PC-9 (cell line): ENCODE measurements at regions of chr2 and their contacts with region 1.

Region 1: GRCh38 chr2:45554073-45554741 is 56.9 kb downstream of the SRBD1 start:
- DNase-seq: no peak
- H3K4me3 ChIP-seq: no peak overlapping the region
- H3K27ac ChIP-seq: no peak overlapping the region
- H3K4me1 ChIP-seq: 0 out of 2 replicates have a peak, but pooled peaks cover 7% of the 10 kb centered on the region
- H3K27me3 ChIP-seq: no peaks in the 10 kb centered on the region
- CTCF ChIP-seq: no peak

Region 2: GRCh38 chr2:44397447-44398175 is 1156.6 kb before region 1 on chr2:
- CTCF ChIA-PET with region 1: no interaction called
- POLR2A ChIA-PET with region 1: interaction called, 15 read pairs
- intact Hi-C with region 1: no loop called
- DNase-seq: no peak
- H3K4me3 ChIP-seq: no peak overlapping the region
- H3K27ac ChIP-seq: no peak overlapping the region
- H3K4me1 ChIP-seq: no peaks in the 10 kb centered on the region
- H3K27me3 ChIP-seq: no peaks in the 10 kb centered on the region
- CTCF ChIP-seq: no peak

Region 3: DNA sequence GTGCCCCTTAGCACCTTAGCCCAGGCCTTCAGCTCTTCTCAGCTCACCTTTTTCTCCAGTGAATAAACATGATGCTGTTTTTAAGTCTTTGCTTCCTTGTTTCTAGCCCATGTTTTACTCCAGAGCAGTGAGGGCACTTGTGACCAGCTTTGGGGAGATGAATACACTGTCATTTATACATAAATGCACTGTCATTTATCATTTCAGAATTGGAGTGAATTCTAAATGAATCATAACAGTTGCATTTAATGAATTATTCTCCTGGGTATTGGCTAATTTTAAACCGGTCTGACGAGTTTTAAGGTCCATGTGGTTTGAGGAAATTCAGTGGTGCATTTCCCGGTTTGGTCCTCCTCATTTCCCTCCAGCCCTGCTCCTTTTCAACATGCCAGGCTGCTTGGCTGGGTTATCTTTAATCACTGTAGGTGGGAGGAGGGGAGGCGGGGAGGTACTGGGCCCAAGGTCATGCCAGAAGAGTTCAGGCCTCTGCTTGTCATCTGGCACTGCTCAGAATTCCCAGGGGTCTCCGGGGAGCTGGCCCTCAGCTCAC is 121.1 kb after region 1 on chr2:
- CTCF ChIA-PET with region 1: no interaction called
- POLR2A ChIA-PET with region 1: no interaction called
- intact Hi-C with region 1: no loop called
- DNase-seq: peak; percentile 72 to 99
- H3K4me3 ChIP-seq: peak overlapping the region; percentile 32; the same call in 1 of the 2 replicates
- H3K27ac ChIP-seq: peak overlapping the region; percentile 94
- H3K4me1 ChIP-seq: peaks cover 85% of the 10 kb centered on the region
- H3K27me3 ChIP-seq: no peaks in the 10 kb centered on the region
- CTCF ChIP-seq: no peak